Cardiac septum (tissue), 1 donor: ENCODE measurements at regions of chr6 and their contacts with region 1.

Region 1: DNA sequence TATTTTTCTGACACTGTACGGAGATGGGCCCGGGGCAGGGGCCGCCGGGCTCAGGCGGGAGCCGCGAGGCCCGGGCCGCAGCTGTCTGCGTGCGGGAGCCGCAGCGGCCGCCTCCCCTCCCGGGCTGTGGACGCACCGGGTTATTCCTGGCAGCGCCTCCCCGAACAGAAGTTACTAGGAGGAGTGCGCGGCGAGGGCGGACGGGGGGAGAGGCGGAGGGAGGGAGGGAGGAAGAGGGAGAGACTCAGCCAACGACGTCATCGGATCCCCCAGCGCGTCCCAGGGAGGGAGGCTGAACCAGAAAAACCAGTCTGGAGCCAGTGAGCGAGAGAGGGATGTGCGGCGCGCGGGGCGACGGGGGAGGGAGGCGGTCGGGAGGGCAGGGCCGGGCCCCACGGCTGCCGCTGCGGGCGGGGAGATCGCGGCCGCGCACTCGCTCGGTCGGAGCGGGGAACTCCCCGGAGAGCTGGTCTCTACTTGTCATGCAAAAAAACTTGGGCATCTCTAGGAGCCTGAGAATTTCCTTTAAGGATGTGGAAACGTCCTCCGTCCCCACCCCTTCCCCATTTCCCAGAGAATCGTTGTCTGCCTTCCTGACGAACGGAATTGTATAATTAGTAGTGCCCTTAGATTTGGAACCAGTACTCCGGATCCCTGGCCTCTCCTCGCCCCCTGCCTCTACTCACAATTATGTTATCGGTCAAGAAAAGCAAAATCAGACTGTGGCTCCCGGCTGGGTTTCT is 1.4 kb upstream of the HIVEP2 start:
- DNase-seq: peak; percentile 98

Region 2: DNA sequence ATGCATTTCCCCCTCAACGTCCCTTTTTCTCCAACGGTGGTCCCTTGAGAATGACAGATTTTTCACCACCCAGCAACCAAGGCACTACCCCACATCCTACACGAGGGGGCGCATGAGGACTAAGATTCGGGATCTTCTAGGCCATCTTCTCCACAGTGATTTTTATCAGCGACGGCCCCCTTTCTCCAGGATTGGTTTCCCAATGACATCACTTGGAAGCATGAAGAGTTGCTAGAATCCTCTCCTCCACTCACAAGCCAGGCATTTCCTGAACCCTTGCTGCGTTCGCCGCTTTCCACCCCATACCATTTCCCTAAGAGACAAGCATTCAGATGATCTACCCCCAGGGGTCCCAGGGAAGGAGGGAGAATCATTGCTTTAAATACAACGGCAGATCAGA is 253.4 kb before region 1 on chr6:
- intact Hi-C with region 1: loop called (anchors 5 kb)
- DNase-seq: no peak

Region 3: GRCh38 chr6:142827369-142827768 is 119.0 kb before region 1 on chr6:
- intact Hi-C with region 1: loop called (anchors 5 kb)
- DNase-seq: no peak

Region 4: DNA sequence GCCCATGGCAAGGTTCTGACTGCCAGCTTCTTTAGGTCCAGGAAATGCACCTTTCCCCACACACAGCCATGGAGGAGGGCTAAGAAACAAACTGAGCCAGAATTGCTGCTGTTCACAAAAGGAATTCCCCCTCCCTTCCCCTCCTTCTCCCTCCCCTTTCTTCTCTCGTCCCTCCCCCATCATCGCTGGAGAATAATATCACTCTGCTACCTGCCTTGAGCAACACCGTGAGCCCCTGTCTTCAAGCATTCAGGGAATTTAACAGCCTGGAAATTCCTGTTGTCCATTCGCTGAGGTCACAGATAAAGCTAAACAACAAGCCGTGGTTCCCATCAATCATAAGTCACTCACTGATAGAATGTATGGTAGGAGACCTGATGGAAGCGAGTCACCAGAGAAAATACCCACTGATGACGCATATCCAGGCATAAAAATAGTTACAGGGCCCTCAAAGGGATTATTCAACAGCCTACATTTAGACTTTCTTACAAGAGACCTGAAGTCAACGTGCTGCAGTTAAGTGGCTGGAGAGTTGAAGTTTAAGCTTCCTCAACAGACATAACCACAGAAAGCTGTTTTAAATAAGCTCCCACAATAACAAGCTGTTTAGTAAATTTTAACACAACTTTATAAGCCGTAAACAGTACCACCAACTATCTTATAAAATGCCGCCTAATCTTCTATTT is 61.0 kb before region 1 on chr6:
- intact Hi-C with region 1: loop called (anchors 1 kb)
- DNase-seq: no peak

Region 5: DNA sequence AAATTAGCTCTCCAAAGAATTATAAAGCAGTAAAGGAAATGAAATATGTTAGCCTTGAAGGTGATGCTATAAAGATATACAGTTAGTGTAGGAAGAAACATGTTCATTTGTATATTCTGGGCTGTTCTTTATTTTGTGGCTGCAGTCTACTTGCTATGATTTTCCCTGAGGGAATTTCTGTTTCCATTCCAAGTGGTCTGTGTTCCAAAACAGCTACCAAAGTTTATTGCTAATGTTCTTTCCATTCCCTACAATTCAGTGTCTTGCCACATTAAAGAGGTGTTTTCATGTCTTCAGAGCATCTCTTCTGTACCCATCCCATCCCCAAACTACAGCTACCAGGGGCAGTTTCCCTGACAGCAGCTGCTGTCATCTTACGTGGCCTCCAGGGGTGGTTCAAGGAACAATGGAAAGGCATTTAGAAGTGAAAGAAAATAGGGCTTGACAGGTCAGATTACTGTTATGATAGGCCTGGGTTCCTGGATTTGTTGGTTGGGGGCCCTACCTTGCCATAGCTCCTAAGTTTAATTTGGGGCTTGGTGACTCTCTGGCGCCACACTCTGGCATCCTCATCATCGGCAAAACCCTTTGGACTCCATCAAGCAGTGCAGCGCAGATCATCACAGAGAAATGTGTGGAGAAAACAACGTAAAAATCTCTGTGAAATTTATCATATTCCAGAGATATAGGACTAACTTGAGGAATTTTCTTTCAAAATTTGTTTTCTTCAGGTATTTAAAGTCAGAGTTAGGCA is 80.5 kb after region 1 on chr6:
- intact Hi-C with region 1: loop called (anchors 5 kb)
- DNase-seq: peak; percentile 74

Region 6: DNA sequence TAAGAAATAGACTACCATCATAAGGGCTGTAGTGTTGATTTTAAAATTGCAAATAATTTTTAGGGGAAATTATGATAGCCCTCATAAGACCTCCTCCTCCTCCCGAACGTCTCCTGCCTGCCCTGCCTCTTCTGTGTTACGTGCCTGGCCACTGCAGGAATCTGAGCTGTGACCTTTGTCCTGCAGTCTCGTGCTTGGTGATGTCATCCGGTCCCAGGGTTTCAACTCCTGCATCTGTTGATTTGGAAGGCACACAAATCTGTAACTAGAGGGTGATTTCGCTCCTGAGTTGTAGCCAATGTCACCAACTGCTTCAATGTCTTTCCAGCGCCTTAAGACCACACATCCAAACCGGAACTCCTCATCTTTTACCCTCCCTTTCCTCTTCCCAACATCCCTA is 277.5 kb after region 1 on chr6:
- intact Hi-C with region 1: loop called (anchors 10 kb)
- DNase-seq: no peak

Region 7: DNA sequence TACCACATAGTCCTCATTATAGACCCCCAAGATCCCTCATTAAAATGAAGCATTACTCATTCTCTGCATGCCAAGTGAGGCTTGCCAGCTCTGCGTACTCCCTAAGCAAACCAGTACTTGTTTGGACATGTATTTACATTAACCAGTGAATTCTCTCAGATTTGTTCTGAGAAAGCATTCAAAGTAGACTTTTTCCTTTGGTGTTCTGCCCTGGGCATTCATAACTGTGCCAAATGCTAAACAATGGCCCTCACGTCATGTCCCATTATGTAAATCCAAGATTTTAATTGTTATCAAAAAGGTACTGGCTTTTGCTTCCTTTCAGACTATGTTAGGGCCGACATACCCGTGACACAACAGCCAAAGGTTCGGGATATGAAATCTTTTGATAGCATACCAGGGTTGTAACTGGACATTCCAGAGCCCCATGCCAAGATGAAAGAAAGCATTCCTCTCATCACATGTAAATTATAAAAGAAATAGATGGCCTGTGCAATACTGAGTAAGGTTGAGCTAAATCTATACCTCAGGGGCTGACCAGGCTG is 340.0 kb after region 1 on chr6:
- intact Hi-C with region 1: no loop called
- DNase-seq: no peak